ENCODE measurements at regions of chr12 and their contacts with region 1.

Region 1: GRCh38 chr12:3168223-3169221 is 91.3 kb downstream of the TSPAN9 start:
- DNase-seq: no peak
- H3K4me3 ChIP-seq: no peak overlapping the region
- H3K27ac ChIP-seq: no peak overlapping the region
- H3K4me1 ChIP-seq: peaks cover 10% of the 10 kb centered on the region
- H3K27me3 ChIP-seq: no peaks in the 10 kb centered on the region
- CTCF ChIP-seq: no peak
- POLR2A ChIP-seq: no peak

Region 2: GRCh38 chr12:3193755-3194154 is 25.2 kb after region 1 on chr12:
- CTCF ChIA-PET with region 1: interaction called, 4 read pairs
- POLR2A ChIA-PET with region 1: no interaction called
- dilution Hi-C with region 1: no loop called
- intact Hi-C with region 1: loop called (anchors 2 kb)
- DNase-seq: no peak
- H3K4me3 ChIP-seq: no peak overlapping the region
- H3K27ac ChIP-seq: no peak overlapping the region
- H3K4me1 ChIP-seq: no peaks in the 10 kb centered on the region
- H3K27me3 ChIP-seq: no peaks in the 10 kb centered on the region
- CTCF ChIP-seq: no peak
- POLR2A ChIP-seq: no peak

Measured in endothelial cell of umbilical vein (primary cell).